ENCODE measurements at regions of chr13 and their contacts with region 1.

Region 1: GRCh38 chr13:27449936-27450828 is at the start of gene MTIF3:
- DNase-seq: peak; percentile 97
- ATAC-seq: peak; percentile 92
- total RNA-seq, gene MTIF3: 185 TPM

Region 2: GRCh38 chr13:27171827-27172494 is 278.2 kb before region 1 on chr13:
- intact Hi-C with region 1: loop called (anchors 10 kb)
- DNase-seq: peak; percentile 96
- ATAC-seq: peak; percentile 99

Region 3: GRCh38 chr13:27264181-27264580 is 186.0 kb before region 1 on chr13:
- intact Hi-C with region 1: no loop called
- DNase-seq: no peak
- ATAC-seq: peak; percentile 69

Region 4: GRCh38 chr13:27424246-27425157 is 25.7 kb before region 1 on chr13 and contains the start of gene GTF3A:
- intact Hi-C with region 1: loop called (anchors 1 kb)
- DNase-seq: peak; percentile 93
- ATAC-seq: peak; percentile 95
- total RNA-seq, gene GTF3A: 235 TPM

Region 5: GRCh38 chr13:27620377-27621115 is 170.4 kb after region 1 on chr13 and contains the start of gene LNX2:
- intact Hi-C with region 1: loop called (anchors 5 kb)
- DNase-seq: peak; percentile 99
- ATAC-seq: peak; percentile 98
- total RNA-seq, gene LNX2: 11.4 TPM

Region 6: DNA sequence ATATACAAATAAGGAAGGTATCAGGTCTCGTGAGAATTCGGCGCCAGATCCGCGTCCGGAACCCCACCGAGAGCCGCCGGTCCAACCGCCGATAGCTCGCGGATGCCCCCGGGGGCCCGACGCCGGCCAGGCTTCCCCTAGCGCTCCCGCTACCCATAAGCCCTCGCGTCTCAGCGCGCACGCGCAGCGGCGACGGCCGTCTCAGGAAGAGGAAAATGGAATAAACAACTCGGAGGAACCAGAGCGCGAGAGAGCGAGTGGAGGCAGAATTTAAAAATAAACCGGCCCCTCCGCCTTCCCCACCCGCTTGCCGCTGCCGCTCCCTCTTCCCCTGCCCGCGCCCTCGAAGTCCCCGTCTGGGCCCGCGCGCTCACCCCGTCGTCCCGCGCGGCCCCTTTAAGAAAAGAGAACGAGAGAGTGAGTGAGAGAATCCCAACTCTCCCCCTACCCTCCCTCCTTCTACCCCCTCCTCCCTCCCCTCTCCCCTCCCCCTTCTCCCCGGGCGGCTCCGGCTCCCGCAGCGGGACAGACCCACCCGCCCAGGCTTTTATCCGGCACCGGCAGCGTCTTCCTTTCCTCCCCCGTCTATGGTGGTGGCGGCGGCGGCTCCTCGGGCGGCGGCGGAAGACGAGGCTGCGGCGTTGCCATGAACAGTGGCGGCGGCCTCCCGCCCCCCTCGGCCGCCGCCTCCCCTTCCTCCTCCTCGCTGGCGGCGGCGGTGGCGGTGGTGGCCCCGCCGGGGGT is 688.0 kb after region 1 on chr13 and contains the start of gene PAN3:
- intact Hi-C with region 1: loop called (anchors 10 kb)
- DNase-seq: peak; percentile 98
- ATAC-seq: peak; percentile 90
- total RNA-seq, gene PAN3: 8.7 TPM